Ascending aorta (tissue), 2 donors: ENCODE measurements at regions of chr16 and their contacts with region 1.

Region 1: GRCh38 chr16:30657866-30658730 is at the start of gene FBRS:
- DNase-seq: peak; percentile 100
- H3K4me3 ChIP-seq: peak within 1 kb of the TSS; percentile 89 to 96
- H3K27ac ChIP-seq: peak within 1 kb of the TSS; percentile 98 to 99
- H3K4me1 ChIP-seq: peaks cover 26 to 34% of the 10 kb centered on the region in 2 donors
- H3K27me3 ChIP-seq: no peaks in the 10 kb centered on the region
- CTCF ChIP-seq: peak; percentile 74 to 80 (median 80)
- total RNA-seq, gene FBRS: 26.8 TPM

Region 2: DNA sequence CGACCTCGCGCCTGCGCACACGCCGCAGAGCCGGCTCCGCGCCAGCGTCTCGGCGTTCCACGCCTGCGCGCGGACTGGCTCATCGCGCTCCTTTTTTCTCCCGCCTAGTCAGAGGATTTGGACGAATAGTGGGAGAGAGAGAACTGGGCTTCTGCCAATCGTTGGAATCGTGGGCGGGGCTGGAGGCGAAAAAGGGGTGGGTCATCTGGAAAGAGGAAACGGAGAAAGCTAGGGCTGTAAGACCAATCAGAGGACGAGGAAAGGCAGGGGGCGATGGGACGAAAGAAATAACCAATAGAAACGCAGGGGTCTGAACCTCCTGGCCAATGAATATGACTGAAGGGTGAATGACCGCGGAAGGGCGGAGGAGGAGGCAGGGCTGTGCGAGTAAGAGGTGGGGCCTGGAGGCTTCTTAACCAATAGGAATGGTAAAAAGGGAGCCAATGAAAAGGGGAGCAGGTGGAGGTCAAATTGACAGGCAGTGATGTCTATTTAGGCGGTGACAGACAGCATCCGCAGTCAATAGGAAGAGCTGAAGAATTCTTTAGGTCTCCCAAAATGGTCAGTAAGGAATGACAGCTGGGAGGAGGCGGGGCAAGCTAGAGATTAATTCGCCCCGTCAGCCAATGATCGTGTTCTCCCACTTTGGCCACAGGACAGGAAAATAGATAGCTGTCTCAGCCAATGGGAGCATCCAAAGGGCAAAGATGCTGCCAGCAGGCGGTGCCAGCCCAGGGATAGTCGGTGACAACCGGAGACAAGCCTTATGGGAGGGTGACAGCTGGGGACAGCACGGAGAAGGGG is 287.5 kb before region 1 on chr16 and contains the start of gene TBC1D10B:
- intact Hi-C with region 1: loop called (anchors 2 kb)
- DNase-seq: peak; percentile 99 to 100
- H3K4me3 ChIP-seq: peak within 1 kb of the TSS; percentile 78 to 82
- H3K27ac ChIP-seq: peak within 1 kb of the TSS; percentile 85 to 88
- H3K4me1 ChIP-seq: peaks cover 13 to 26% of the 10 kb centered on the region in 2 donors
- H3K27me3 ChIP-seq: no peaks in the 10 kb centered on the region
- CTCF ChIP-seq: no peak
- total RNA-seq, gene TBC1D10B: 20.9 TPM

Region 3: GRCh38 chr16:30557957-30558788 is 99.9 kb before region 1 on chr16 and contains the start of gene ZNF764:
- intact Hi-C with region 1: loop called (anchors 1 kb)
- DNase-seq: peak; percentile 96 to 99
- H3K4me3 ChIP-seq: peak within 1 kb of the TSS; percentile 91
- H3K27ac ChIP-seq: peak within 1 kb of the TSS; percentile 92 to 94
- H3K4me1 ChIP-seq: peaks cover 9 to 10% of the 10 kb centered on the region in 2 donors
- H3K27me3 ChIP-seq: no peaks in the 10 kb centered on the region
- CTCF ChIP-seq: peak in 1 of 3 experiments; percentile 1
- total RNA-seq, gene ZNF764: 10.9 TPM

Region 4: DNA sequence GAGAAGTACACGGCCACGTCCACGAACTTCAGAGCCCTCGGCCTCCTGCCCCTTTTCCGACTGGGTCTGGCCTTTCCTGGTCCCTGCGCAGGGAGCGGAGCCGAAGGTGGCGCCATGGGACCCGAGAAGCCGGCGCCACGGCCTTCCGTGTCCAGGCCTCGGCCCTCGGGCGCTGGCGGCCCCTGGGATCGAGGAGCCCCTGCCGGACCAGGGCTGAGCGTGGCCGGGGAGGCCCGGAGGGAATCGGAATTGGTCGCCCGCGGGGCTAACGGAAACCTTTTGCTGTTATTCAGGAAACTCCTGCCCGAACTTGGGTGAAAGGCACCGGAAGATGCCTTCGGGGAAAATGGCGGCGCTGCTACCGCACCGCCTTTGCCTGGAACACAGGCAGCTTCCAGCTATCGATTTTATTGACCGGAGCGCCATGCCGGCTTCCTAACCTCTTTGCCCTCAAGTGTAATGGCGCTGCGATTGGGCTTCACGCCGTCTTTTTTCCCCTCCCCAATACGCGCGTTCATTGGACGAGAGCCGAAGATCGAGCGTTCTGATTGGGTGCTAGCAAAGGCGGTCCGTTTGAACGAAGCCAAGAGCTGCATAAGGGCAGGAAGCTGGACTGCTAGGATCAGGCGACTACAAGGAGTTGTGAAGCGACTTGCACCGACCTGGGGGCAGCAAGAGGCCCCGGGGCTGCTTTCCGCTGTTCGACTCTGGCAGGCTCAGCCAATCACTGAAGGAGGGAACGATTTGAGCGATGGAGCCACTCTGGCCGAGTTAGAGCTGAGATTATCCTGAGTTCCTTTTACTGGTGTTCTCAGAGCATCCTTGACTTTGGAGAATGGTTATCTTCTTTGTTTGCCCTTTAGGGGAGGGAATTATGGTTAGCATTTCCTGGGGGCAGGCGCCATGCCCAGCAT is 47.9 kb before region 1 on chr16 and contains the start of gene ZNF689:
- intact Hi-C with region 1: loop called (anchors 2 kb)
- DNase-seq: peak; percentile 73 to 97
- H3K4me3 ChIP-seq: peak within 1 kb of the TSS; percentile 81 to 88
- H3K27ac ChIP-seq: peak within 1 kb of the TSS; percentile 88 to 96
- H3K4me1 ChIP-seq: peaks cover 0 to 10% of the 10 kb centered on the region in 2 donors
- H3K27me3 ChIP-seq: no peaks in the 10 kb centered on the region
- CTCF ChIP-seq: peak in 1 of 3 experiments; percentile 5
- total RNA-seq, gene ZNF689: 7.0 TPM

Region 5: GRCh38 chr16:30669896-30670797 is 12.0 kb after region 1 on chr16:
- intact Hi-C with region 1: no loop called
- DNase-seq: no peak
- H3K4me3 ChIP-seq: no peak overlapping the region
- H3K27ac ChIP-seq: no peak overlapping the region
- H3K4me1 ChIP-seq: no peaks in the 10 kb centered on the region
- H3K27me3 ChIP-seq: no peaks in the 10 kb centered on the region
- CTCF ChIP-seq: no peak

Region 6: DNA sequence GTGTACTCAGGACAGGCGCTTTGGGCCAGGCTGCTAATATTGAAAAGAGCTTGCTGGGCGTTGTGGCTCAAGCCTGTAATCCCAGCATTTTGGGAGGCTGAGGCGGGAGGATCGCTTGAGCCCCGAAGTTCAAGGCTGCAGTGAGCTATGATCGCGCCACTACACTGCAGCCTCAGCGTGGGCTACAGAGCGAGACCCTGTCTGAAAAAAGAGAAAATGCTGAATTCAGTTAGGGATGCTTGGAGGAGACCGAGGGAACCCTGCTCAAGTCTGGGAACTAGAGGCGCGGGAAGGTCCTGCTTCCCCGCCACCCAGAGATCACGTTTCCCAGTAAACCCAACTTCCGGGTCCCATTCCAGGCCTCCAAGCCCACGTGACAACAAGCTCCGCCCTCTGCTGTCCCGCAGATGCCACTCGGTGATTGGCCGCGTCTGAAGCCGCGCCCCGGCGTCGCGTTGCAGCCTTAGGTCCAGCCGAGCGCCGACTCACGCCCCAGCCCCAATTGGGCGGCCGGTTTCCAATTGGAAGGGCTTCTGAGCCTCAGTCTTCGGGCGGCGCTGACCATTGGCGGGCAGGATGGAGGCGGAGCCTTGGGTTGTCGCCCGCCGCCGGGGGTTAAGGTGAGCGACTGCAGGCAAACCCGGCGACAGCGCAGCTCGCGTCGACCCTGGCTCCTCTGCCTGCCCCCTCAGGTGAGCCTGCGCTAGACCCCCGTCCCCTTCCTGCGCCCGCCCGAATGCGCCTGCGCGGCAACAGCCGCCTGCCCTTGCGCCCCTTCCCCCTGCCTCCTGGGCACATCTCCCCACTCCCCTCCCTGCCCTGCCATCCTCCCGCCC is 89.9 kb after region 1 on chr16 and contains the start of gene PHKG2:
- intact Hi-C with region 1: loop called (anchors 5 kb)
- DNase-seq: peak; percentile 97 to 99
- H3K4me3 ChIP-seq: peak within 1 kb of the TSS; percentile 84 to 99
- H3K27ac ChIP-seq: peak within 1 kb of the TSS; percentile 87
- H3K4me1 ChIP-seq: peaks cover 7 to 8% of the 10 kb centered on the region in 2 donors
- H3K27me3 ChIP-seq: no peaks in the 10 kb centered on the region
- CTCF ChIP-seq: no peak
- total RNA-seq, gene PHKG2: 78.8 TPM

Region 7: GRCh38 chr16:31073968-31074813 is 416.1 kb after region 1 on chr16 and contains the starts of genes ZNF646 and ZNF668:
- intact Hi-C with region 1: loop called (anchors 10 kb)
- DNase-seq: peak; percentile 91 to 99
- H3K4me3 ChIP-seq: peak within 1 kb of the TSS; percentile 73 to 87
- H3K27ac ChIP-seq: peak within 1 kb of the TSS; percentile 87 to 91
- H3K4me1 ChIP-seq: peaks cover 0 to 20% of the 10 kb centered on the region in 2 donors
- H3K27me3 ChIP-seq: no peaks in the 10 kb centered on the region
- CTCF ChIP-seq: no peak
- total RNA-seq, gene ZNF646: 11.6 TPM
- total RNA-seq, gene ZNF668: 12.2 TPM